ENCODE measurements at regions of chr13 and their contacts with region 1.

Region 1: DNA sequence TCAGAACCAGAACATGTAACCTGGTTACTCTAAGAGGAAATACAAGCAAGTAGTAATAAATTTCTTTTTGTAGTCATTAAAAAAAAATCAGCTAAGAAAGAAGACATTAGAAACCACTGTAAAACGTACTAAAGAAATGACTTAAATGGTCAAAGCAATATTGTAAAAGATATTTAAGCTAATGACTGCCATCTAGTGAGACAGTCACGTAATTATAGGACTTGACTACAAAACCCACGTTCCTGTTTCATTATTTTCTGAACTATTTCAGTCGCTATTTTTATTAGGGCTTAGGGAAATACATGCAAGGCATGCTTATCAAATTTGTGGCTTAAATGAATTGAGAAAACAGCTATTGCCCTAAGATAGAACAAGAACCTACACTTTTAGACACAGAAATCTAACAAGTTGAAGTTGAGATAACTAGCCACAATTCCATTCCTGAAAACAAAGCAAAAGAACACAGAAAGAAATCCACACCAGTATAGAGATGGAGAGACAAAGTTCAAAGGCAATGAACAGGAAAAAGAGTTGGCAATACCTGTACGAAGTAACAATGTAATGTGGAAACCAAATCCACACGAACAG is 17.9 kb downstream of the ALG5 start:
- DNase-seq: peak; percentile 35
- H3K4me3 Mint-ChIP-seq: no peak overlapping the region
- H3K27ac Mint-ChIP-seq: no peak overlapping the region
- H3K4me1 Mint-ChIP-seq: peaks cover 4% of the 10 kb centered on the region
- H3K27me3 Mint-ChIP-seq: no peaks in the 10 kb centered on the region

Region 2: GRCh38 chr13:36352350-36352749 is 628.9 kb before region 1 on chr13:
- intact Hi-C with region 1: loop called (anchors 2 kb)
- DNase-seq: no peak
- H3K4me3 Mint-ChIP-seq: no peak overlapping the region
- H3K27ac Mint-ChIP-seq: no peak overlapping the region
- H3K4me1 Mint-ChIP-seq: peaks cover 3% of the 10 kb centered on the region
- H3K27me3 Mint-ChIP-seq: peaks cover 9% of the 10 kb centered on the region

Region 3: GRCh38 chr13:36858290-36858689 is 123.0 kb before region 1 on chr13:
- intact Hi-C with region 1: loop called (anchors 1 kb)
- DNase-seq: peak; percentile 65
- H3K4me3 Mint-ChIP-seq: no peak overlapping the region
- H3K27ac Mint-ChIP-seq: no peak overlapping the region
- H3K4me1 Mint-ChIP-seq: peaks cover 16% of the 10 kb centered on the region
- H3K27me3 Mint-ChIP-seq: peaks cover 8% of the 10 kb centered on the region